ENCODE measurements at regions of chr1 and their contacts with region 1.

Region 1: GRCh38 chr1:204398217-204399081 is 13.2 kb downstream of the PPP1R15B start:
- DNase-seq: peak; percentile 82
- ATAC-seq: peak; percentile 99
- H3K4me3 ChIP-seq: no peak overlapping the region
- H3K27ac ChIP-seq: no peak overlapping the region; the same call in 1 of the 2 replicates
- H3K4me1 ChIP-seq: peaks cover 0 to 6% of the 10 kb centered on the region in 2 experiments; a peak in 2 of 4 replicates
- H3K27me3 ChIP-seq: no peaks in the 10 kb centered on the region
- CTCF ChIP-seq: peak; percentile 86 to 93 (median 87)
- POLR2A ChIP-seq: no peak
- RAD21 ChIP-seq: peak; percentile 81

Region 2: DNA sequence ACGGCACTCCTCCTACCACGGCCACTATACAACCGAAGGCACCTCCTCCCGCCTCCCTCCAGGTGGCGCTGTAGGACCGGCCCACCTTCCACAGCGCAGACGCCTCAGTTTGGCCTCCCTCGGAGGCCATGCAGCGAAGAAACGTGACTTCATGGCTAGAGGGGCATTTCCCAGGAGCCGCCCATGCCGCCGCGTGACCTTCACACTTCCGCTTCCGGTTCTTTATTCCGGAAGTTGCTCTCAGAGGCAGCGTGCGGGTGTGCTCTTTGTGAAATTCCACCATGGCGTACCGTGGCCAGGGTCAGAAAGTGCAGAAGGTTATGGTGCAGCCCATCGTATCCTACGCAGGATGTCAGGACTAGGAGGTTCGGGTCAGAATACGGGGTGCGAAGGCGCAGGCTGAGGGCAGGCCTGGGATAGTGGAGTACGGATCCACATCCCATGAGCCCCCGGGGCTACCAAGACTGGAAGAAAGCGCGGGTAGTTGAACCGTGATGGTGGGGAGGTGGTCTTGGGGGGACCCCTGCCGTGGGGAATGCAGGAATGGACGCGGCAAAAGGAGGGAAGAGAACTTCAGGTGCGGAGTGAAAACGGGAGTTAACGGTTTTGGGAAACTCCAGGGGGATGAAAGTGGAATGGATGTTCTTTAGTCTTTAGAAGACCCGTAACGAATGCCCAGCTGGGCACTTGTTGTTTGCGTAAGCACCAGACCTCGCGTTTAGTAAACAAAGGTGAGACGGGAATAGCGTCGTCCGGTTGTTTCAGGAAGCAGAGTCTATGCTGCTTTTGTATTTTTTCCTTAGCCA is 536.9 kb before region 1 on chr1 and contains the start of gene SNRPE:
- CTCF ChIA-PET with region 1: interaction called, 4 read pairs
- POLR2A ChIA-PET with region 1: no interaction called
- RAD21 ChIA-PET with region 1: no interaction called
- intact Hi-C with region 1: loop called (anchors 10 kb)
- DNase-seq: peak; percentile 98
- ATAC-seq: peak; percentile 98
- H3K4me3 ChIP-seq: peak within 1 kb of the TSS; percentile 78 to 90
- H3K27ac ChIP-seq: peak within 1 kb of the TSS; percentile 78
- H3K4me1 ChIP-seq: peaks cover 4 to 20% of the 10 kb centered on the region in 2 experiments; a peak in 3 of 4 replicates
- H3K27me3 ChIP-seq: no peaks in the 10 kb centered on the region
- CTCF ChIP-seq: peak; percentile 84 to 97 (median 92)
- POLR2A ChIP-seq: peak; percentile 52
- RAD21 ChIP-seq: peak; percentile 98
- total RNA-seq, gene SNRPE: 288 TPM

Region 3: DNA sequence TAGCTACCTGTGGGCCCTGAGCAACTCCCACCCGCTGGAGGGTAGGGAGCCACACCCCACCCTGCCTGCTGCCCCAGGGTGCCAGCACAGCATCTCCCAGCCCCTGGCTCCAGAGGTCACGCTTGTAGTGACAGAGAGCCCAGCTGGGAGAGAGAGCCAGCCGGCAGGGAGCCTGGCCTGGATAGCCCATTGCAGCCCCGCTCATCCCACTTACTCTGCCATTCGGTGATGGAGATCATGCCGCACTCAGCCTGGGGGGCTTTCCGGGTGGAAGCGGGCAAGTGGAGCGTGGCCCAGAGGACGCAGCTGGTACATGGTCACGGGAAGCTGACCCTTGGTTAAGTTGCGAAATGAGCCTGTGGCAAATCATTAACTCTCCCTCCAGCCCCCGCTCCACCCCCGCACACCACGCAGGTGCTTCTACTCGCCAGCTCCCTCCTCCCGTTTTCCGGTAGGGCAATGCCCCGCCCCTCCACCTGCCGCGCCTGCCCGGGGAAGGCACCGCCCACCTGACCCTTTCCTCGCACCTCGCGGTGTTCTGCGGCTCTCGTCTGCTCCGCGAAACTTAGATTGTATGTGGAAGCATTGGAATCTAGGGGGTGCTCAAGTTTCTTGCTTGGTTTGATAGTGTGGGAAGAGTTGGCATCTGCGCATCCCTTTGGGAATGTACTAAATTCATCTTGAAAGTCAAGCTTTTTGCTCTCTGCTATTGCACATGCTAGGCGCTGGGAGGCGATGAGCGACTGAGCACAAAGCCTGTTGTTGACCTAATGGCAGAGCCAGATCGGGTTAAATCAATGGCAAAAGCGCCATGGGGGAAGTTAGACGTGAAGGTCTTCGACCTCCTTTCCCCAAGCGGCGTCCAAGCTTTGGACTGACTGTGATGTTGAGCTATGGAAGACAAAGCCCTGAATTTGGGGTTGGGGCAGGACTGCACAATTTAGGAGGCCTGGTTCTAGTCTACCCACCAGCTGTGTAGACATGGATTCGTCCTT is 184.5 kb before region 1 on chr1 and contains the start of gene GOLT1A:
- CTCF ChIA-PET with region 1: interaction called, 16 read pairs
- POLR2A ChIA-PET with region 1: interaction called, 3 read pairs
- RAD21 ChIA-PET with region 1: interaction called in 1 of 2 experiments, 3 read pairs
- intact Hi-C with region 1: no loop called
- DNase-seq: peak; percentile 85
- ATAC-seq: peak; percentile 96
- H3K4me3 ChIP-seq: peak within 1 kb of the TSS; percentile 70 to 72
- H3K27ac ChIP-seq: peak within 1 kb of the TSS; percentile 50; the same call in 1 of the 2 replicates
- H3K4me1 ChIP-seq: peaks cover 6 to 23% of the 10 kb centered on the region in 2 experiments; a peak in 3 of 4 replicates
- H3K27me3 ChIP-seq: no peaks in the 10 kb centered on the region
- CTCF ChIP-seq: peak; percentile 74 to 87 (median 77)
- POLR2A ChIP-seq: no peak
- RAD21 ChIP-seq: peak; percentile 84
- total RNA-seq, gene GOLT1A: 8.0 TPM

Region 4: DNA sequence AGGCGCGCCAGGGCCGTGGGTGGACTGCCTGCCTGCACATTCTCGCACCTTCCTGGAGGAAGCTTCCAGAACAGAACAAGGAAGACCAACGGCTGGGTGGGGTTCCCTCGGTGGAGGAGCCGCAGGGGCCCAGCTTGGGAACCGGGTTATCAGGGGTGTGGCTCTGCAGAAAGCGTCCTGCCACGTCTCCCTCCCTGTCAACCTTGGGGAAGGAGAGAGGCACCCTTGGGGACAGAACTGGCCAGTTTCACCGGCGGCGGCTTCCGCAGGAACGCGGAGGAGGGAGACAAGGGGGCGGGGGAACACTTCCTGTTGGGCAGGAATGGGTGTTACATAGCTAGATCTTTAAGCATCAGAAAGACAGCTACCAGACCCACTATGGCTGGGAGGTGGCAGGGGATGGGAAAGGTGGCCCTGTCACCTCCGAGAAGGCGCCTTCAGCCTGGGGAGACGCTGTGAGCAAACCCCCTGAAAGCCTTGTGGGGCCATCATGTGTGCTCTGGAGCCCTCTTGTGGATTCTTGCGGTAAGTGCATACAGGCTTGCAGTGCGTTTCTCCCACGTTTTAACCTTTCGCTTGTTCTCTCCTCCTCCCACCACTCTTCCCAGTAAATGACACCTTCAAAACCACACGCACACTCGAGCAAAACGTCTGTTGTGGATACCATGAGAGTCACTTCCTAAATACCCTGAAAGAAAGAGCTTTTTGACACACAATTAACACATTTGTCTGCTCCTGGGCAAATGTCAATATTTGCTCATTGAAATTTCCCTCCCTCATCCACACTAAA is 34.9 kb before region 1 on chr1:
- CTCF ChIA-PET with region 1: interaction called, 13 read pairs
- POLR2A ChIA-PET with region 1: no interaction called
- RAD21 ChIA-PET with region 1: no interaction called
- intact Hi-C with region 1: no loop called
- DNase-seq: peak; percentile 54
- ATAC-seq: peak; percentile 74
- H3K4me3 ChIP-seq: peak overlapping the region; percentile 10 to 26
- H3K27ac ChIP-seq: no peak overlapping the region; the same call in 1 of the 2 replicates
- H3K4me1 ChIP-seq: peaks cover 6 to 20% of the 10 kb centered on the region in 2 experiments; a peak in 3 of 4 replicates
- H3K27me3 ChIP-seq: no peaks in the 10 kb centered on the region
- CTCF ChIP-seq: peak; percentile 94 to 96 (median 95)
- POLR2A ChIP-seq: peak; percentile 9
- RAD21 ChIP-seq: peak; percentile 99

Region 5: GRCh38 chr1:204384994-204385352 is 13.5 kb before region 1 on chr1:
- CTCF ChIA-PET with region 1: interaction called, 28 read pairs
- POLR2A ChIA-PET with region 1: interaction called, 3 read pairs
- RAD21 ChIA-PET with region 1: no interaction called
- intact Hi-C with region 1: no loop called
- DNase-seq: no peak
- ATAC-seq: 0 out of 2 replicates have a peak, but pooled peaks have one; percentile 17
- H3K4me3 ChIP-seq: no peak overlapping the region
- H3K27ac ChIP-seq: no peak overlapping the region
- H3K4me1 ChIP-seq: peaks cover 0 to 9% of the 10 kb centered on the region in 2 experiments; a peak in 1 of 4 replicates
- H3K27me3 ChIP-seq: no peaks in the 10 kb centered on the region
- CTCF ChIP-seq: no peak
- POLR2A ChIP-seq: no peak
- RAD21 ChIP-seq: no peak

Region 6: GRCh38 chr1:204417231-204417997 is 19.0 kb after region 1 on chr1:
- CTCF ChIA-PET with region 1: interaction called, 18 read pairs
- POLR2A ChIA-PET with region 1: interaction called, 5 read pairs
- RAD21 ChIA-PET with region 1: no interaction called
- intact Hi-C with region 1: no loop called
- DNase-seq: peak; percentile 83
- ATAC-seq: peak; percentile 86
- H3K4me3 ChIP-seq: peak overlapping the region; percentile 29 to 48
- H3K27ac ChIP-seq: peak overlapping the region; percentile 89
- H3K4me1 ChIP-seq: peaks cover 28 to 61% of the 10 kb centered on the region in 2 experiments
- H3K27me3 ChIP-seq: no peaks in the 10 kb centered on the region
- CTCF ChIP-seq: no peak
- POLR2A ChIP-seq: peak; percentile 32
- RAD21 ChIP-seq: no peak

Region 7: GRCh38 chr1:204453141-204453772 is 54.8 kb after region 1 on chr1:
- CTCF ChIA-PET with region 1: no interaction called
- POLR2A ChIA-PET with region 1: no interaction called
- RAD21 ChIA-PET with region 1: no interaction called
- intact Hi-C with region 1: no loop called
- DNase-seq: no peak
- ATAC-seq: no peak
- H3K4me3 ChIP-seq: no peak overlapping the region
- H3K27ac ChIP-seq: no peak overlapping the region
- H3K4me1 ChIP-seq: peaks cover 11 to 30% of the 10 kb centered on the region in 2 experiments; a peak in 3 of 4 replicates
- H3K27me3 ChIP-seq: no peaks in the 10 kb centered on the region
- CTCF ChIP-seq: no peak
- POLR2A ChIP-seq: no peak
- RAD21 ChIP-seq: no peak

Measured in HCT116 (cell line).